ENCODE measurements at regions of chr1 and their contacts with region 1.

Region 1: DNA sequence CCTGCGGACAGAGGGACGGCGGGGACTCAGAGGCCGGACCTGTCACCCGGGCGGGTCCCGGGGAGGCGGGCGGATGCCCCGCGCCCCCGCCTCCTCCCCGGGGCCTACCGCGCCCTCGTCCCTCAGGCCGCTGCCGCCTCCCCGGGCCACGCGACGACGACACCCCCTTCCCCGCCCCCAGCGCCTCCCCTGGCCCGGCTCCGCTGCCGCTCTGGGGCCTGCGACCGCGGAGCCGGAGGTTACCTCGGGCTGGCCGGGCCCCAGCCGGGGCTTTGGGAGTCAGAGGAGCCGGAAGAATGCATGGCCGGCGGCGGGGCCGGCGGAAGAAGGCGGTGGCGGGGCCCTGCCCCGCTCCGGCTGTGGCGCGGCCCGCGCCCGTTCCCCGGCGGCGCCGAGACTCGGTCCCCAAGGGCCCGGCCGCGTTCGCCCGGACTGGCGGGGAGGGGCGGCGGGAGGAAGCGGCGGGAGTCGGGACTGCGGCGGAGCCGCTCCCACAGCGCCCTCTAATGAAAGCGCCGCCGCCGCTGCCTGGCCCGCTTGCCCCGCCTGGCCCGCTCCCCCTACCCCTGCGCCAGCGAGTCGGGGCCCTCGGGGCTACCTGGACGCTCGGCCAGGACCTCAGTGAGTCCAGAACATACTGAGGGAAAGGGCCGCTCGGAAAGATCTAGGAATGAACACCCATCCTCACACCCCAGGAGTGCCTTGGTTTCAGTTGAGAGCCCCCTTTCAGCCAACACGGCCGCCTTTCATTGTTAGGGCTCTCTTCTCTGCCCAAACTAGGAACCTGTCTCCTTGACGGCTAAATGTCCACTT is at the start of gene LPGAT1:
- DNase-seq: peak; percentile 75 to 97 (median 81)

Region 2: GRCh38 chr1:211680752-211681327 is 149.7 kb before region 1 on chr1:
- intact Hi-C with region 1: loop called (anchors 5 kb)
- DNase-seq: peak; percentile 59 to 98 (median 77)

Region 3: DNA sequence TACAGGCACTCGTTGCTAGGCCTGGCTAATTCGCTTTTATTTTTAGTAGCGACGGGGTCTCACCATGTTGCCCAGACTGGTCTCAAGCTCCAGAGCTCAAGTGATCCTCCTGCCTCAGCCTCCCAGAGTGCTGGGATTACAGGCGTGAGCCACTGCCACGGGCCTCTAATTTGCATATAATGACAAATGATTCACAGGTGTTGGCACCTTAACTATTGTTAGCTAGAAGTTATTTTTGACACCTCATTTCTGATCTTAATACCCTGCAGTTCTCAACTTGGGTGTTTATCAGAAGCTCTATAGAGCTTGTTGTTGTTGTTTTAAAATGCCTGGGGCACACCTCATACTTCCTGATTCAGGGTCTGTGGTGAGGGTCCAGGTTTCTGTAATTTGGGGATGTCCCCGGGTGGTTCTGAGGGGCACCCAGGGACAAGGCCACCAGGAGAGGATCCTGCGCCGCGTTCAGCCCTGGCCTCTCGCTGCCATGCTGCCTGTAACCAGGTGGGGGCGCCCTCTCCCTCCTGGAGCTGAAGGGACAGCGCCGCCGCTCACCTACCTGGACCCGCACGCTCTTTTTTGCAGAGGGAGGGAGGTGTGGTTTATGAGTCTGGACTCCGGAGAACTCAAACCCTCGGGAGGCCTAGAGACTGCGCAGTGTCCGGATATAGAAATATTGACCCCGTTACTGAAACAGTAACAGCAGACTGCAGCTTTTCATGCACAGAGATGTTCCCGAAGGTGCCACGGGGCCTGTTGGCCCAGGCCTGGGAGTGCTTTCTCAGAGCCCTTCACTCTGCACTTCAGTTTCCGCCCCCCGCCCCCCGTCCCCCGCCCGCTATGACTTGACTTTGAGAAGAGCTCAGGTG is 132.1 kb before region 1 on chr1:
- intact Hi-C with region 1: loop called (anchors 1 kb)
- DNase-seq: peak; percentile 69 to 97 (median 87)

Region 4: GRCh38 chr1:211724687-211725196 is 105.8 kb before region 1 on chr1:
- intact Hi-C with region 1: no loop called
- DNase-seq: peak in 1 of 10 donors; percentile 78

Region 5: DNA sequence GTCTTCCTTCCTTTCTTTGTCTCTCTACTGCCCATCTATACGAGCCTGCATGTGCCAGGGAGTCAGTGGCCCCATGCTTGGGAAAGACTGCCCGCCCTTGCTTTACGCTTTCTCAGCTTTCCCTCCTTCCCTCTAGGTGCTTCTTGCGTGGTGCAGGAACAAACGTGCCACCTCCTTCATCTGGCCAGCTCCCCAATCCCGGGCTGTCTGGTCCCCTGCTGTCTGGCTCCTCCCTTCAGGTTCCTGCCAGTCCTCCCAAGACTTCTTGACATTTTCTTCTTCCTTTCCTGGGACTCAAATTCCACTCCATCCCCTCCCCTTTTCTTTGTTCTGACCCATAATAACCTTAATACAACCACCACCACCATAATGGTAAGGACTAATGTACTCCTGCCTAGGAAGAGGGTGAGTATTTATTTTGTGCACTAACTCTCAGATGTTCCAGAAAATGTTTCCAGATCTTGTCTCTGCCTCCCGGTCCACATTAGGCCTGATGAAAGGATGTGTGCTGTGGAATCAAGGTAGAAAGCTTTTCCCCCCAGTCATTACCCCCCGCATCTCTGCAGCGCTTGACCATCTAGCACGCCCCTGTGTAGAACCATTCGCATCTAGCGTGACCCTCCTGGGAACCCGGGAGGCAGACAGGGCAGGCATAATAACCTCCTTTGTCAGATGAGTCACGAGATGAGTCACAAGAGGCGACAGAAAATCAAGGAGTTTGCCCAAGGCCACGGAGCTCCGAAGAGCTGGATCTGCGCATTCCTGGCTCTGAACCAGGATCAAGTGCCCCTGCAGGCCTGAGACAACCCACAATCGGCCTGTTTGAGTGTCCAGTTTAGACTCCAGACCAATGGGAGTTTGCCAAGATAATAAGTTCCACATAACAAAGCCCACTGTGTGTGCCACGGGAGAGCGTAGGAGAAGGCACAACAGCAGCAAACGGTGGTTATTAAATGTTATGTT is 95.0 kb before region 1 on chr1:
- intact Hi-C with region 1: loop called (anchors 2 kb)
- DNase-seq: peak in 9 of 10 donors; percentile 41 to 94 (median 71)

Region 6: DNA sequence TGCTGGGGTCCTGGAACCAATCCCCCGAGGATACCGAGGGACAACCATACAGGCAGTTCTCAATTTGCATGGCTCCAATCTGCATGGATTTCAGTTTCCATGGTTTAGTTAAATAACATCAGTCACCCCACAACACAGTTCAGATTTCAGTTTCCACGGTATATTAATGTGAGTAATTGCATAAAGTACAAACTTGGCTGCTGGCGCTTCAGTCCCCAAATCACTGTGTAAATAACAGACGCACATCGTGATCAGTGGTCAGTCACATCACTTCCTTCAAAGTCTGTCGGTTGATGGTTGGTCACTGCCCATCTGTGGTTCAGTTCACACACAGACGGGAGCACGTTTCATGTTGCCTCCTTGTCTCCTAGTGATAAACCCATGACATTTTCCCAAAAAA is 66.4 kb after region 1 on chr1:
- intact Hi-C with region 1: no loop called
- DNase-seq: no peak

Region 7: DNA sequence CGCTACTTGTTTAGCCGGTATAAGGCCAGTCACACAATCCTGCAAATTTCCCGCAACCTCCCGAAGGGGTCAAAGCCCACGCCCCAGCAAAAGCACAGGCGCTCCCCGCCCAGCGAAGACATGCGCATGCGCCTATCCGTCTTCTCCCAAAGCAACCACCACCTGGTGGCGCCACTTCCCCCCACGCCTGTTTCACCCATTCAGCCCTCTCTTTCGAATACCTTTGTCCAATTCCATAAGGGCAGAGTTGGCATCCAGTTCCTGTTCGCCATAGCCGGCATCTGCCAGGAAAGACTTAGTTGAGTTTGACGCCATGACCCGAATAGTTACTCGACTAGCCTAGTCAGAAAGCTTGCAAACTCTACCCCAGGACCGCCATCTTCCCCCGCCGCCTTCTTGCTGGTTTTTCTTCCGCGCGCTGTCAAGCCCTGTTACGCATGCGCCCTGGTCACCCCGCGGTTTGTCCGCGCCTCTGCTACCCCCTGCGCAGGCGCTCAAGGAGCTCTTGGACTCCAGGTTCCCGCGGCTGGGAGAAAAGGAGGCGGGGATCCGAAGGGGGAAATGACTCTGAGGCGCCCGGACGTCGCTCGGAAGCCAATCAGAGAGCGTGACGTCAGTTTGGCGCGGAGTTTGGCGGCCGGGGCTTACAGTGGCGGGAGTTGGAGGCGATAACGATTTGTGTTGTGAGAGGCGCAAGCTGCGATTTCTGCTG is 204.7 kb after region 1 on chr1 and contains the starts of genes DTL and INTS7:
- intact Hi-C with region 1: loop called (anchors 1 kb)
- DNase-seq: peak; percentile 96 to 100 (median 98)

Measured in posterior cingulate gyrus (tissue), 11 donors.